Activated T-helper 2 cell treated with anti-CD3 and anti-CD28 coated beads, Interferon-gamma antibody, Interleukin-2, Interleukin-4, amounts not matched to agents 10 μg/mL and 5 μg/mL and 100 μg/mL, durations not matched to agents 14 hours and 24 hours and 36 hours (primary cell): ENCODE measurements at regions of chr3 and their contacts with region 1.

Region 1: DNA sequence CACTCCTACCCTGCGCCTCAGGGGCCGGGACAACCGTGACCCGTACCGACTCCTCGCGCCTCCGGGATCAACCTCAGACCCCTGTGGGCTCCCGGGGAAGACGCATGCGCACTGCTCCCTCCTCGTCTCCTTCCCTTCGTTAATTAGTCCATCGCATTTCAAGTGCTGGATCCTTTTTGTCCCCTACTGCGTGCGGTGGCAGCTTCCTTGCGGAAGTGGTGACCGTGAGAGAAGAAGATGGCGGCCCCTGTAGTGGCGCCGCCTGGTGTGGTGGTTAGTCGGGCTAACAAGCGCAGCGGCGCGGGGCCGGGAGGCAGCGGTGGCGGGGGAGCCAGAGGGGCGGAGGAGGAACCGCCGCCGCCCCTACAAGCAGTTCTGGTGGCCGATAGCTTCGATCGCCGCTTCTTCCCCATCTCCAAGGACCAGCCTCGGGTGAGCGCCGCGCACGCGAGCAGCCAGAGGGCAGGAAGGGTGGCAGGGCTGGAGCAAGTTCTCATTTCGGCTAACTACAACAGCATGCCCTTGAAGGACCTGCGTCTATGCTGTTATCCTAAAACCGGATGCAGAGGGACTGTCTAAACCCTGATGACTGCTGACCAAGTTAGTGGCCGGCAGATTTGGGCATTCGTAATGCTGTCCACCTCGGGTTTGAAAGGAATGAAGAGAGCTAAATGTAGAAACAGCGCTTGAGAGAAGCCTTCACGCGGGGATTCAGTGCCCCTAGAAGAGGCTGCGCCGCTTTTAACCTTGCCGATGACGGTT is at the start of gene EIF2B5:
- DNase-seq: peak; percentile 83
- H3K4me3 Mint-ChIP-seq: peak within 1 kb of the TSS; percentile 91
- H3K27ac Mint-ChIP-seq: peak within 1 kb of the TSS; percentile 92
- H3K4me1 Mint-ChIP-seq: peaks cover 21% of the 10 kb centered on the region
- H3K27me3 Mint-ChIP-seq: peaks cover 2% of the 10 kb centered on the region
- total RNA-seq, gene EIF2B5: 70.2 and 75.0 TPM in 2 replicates

Region 2: GRCh38 chr3:183044547-183045229 is 1090.6 kb before region 1 on chr3:
- intact Hi-C with region 1: no loop called
- DNase-seq: no peak
- H3K4me3 Mint-ChIP-seq: no peak overlapping the region
- H3K27ac Mint-ChIP-seq: no peak overlapping the region
- H3K4me1 Mint-ChIP-seq: peaks cover 7% of the 10 kb centered on the region
- H3K27me3 Mint-ChIP-seq: no peaks in the 10 kb centered on the region

Region 3: DNA sequence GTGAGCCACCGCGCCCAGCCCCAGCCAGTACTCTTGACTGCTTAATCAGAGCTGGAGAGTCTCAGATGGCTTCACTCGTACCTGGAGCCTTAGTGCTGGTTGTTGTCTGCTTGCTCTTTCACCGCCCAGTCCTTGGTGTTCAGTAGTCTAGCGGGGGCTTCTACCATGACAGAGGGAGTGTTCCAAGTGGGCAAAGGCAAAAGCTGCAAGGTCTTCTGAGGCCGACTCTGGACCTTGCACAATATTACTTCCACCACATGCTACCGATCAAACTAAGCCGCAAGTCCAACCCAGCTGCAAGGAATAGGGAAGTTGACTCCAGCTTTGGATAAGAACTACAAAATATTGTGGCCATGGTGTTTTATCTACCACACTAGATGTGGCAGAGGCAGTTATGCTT is 257.3 kb before region 1 on chr3:
- intact Hi-C with region 1: no loop called
- DNase-seq: no peak
- H3K4me3 Mint-ChIP-seq: no peak overlapping the region
- H3K27ac Mint-ChIP-seq: no peak overlapping the region
- H3K4me1 Mint-ChIP-seq: peaks cover 23% of the 10 kb centered on the region
- H3K27me3 Mint-ChIP-seq: no peaks in the 10 kb centered on the region

Region 4: DNA sequence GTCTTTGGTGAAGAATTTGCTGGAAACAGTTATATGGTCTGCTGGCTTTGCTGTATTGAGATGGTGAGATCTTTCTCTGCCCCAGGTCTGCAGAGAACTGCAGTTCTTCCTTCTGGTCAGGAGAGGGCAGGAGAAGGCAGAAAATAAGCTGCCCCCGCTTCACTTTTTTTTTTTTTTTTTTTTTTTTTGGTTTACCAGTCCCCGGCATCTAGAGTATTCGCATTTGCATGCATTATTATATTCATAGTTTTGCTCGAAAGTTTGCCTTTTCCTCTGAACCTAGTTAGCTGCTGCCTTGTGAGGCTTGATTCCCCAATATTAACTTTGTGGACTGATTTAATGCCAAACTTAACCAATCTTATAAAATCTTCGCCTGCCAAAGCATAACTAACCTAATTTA is 240.0 kb before region 1 on chr3:
- intact Hi-C with region 1: loop called (anchors 10 kb)
- DNase-seq: no peak
- H3K4me3 Mint-ChIP-seq: no peak overlapping the region
- H3K27ac Mint-ChIP-seq: no peak overlapping the region
- H3K4me1 Mint-ChIP-seq: peaks cover 3% of the 10 kb centered on the region
- H3K27me3 Mint-ChIP-seq: peaks cover 5% of the 10 kb centered on the region

Region 5: GRCh38 chr3:184017672-184018423 is 117.5 kb before region 1 on chr3 and contains the start of gene ABCC5:
- intact Hi-C with region 1: loop called (anchors 2 kb)
- DNase-seq: peak; percentile 78
- H3K4me3 Mint-ChIP-seq: peak within 1 kb of the TSS; percentile 97
- H3K27ac Mint-ChIP-seq: peak within 1 kb of the TSS; percentile 86
- H3K4me1 Mint-ChIP-seq: peaks cover 23% of the 10 kb centered on the region
- H3K27me3 Mint-ChIP-seq: peaks cover 10% of the 10 kb centered on the region
- total RNA-seq, gene ABCC5: 20.6 and 21.0 TPM in 2 replicates

Region 6: DNA sequence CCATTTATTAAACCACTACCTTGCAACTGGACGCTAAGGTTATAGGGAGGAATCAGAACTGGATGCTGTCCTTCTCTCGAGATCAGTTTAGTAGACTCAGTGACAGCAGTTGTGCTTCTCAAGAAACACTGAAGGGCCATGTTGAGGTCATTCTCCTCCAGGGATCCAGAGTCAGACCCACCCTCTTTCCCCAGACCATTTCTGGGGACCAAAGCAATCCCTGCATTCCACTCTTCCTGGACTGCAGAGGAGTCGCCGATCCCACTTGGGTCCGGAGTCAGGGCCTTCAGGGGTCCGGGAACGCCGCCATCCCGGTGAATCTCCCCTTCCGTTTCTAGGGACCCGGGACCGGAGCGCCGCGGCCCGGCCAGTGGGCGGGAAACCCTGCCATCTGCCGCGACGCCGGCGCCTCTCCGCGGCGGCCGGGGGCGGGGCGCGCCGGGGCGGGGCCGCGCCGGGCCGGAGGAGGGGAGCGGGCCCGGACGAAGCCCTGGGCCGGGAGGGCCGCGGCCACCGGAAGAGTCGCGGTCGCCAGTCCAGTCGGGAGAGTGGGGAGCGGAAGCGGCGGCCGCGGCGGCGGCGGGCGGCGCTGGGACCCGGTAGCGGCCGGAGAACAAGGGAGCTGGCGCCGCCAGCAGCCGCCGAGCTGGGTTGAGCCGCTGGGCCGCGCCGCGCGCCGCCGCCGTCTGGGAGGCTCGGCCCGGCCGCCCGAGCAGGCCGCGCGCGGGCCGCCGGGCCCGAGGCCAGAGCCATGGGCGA is 19.7 kb after region 1 on chr3 and contains the start of gene DVL3:
- intact Hi-C with region 1: loop called (anchors 1 kb)
- DNase-seq: peak; percentile 49
- H3K4me3 Mint-ChIP-seq: peak within 1 kb of the TSS; percentile 96
- H3K27ac Mint-ChIP-seq: peak within 1 kb of the TSS; percentile 79
- H3K4me1 Mint-ChIP-seq: peaks cover 16% of the 10 kb centered on the region
- H3K27me3 Mint-ChIP-seq: no peaks in the 10 kb centered on the region
- total RNA-seq, gene DVL3: 53.8 and 56.1 TPM in 2 replicates

Region 7: GRCh38 chr3:184174646-184175492 is 39.5 kb after region 1 on chr3 and contains the start of gene AP2M1:
- intact Hi-C with region 1: loop called (anchors 1 kb)
- DNase-seq: peak; percentile 98
- H3K4me3 Mint-ChIP-seq: peak within 1 kb of the TSS; percentile 97
- H3K27ac Mint-ChIP-seq: peak within 1 kb of the TSS; percentile 82
- H3K4me1 Mint-ChIP-seq: peaks cover 17% of the 10 kb centered on the region
- H3K27me3 Mint-ChIP-seq: no peaks in the 10 kb centered on the region
- total RNA-seq, gene AP2M1: 234 and 240 TPM in 2 replicates

Region 8: DNA sequence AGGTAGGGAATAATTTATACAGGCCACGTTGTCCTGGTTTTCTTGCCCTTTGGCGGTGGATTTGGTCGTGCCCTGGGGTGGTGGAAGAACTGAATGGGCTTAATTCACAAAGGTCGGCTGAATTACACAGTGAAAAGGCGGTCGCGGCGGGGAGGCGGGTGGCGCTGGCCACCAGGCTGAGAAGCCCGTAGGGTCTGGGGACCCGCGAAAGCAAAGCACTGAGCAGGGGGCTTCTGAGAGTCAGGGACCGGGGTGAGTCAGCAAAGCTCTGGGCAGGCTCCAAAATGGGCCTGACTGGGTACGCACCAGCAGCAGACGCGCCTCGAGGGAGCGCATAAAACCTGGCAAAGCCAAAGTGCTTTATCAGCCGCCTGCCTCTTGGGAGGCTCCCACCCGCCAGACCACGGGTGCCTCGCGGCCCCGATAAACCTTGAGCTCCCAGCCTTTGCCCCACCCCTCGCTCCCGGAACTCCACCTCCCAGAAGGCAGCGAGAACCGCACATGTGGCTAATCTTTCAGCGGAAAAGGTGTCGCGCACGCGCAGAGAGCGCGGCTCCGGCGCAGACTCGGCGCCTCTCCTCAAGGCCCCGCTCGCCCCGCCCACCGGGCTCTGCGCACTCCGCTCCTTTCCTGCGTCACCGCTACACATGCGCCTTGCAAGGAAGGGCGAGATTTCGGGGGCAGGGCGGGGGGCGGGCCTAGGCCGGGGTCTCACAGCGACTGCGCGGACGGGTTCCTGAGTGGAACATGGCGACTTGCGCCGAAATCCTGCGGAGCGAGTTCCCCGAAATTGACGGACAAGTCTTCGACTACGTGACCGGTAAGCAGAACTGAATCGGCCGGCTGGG is 50.4 kb after region 1 on chr3 and contains the start of gene ABCF3:
- intact Hi-C with region 1: loop called (anchors 1 kb)
- DNase-seq: peak; percentile 99
- H3K4me3 Mint-ChIP-seq: peak within 1 kb of the TSS; percentile 94
- H3K27ac Mint-ChIP-seq: peak within 1 kb of the TSS; percentile 93
- H3K4me1 Mint-ChIP-seq: peaks cover 18% of the 10 kb centered on the region
- H3K27me3 Mint-ChIP-seq: no peaks in the 10 kb centered on the region
- total RNA-seq, gene ABCF3: 68.2 and 73.4 TPM in 2 replicates

Region 9: GRCh38 chr3:184362668-184363540 is 227.6 kb after region 1 on chr3:
- intact Hi-C with region 1: loop called (anchors 1 kb)
- DNase-seq: peak; percentile 96
- H3K4me3 Mint-ChIP-seq: peak overlapping the region; percentile 100
- H3K27ac Mint-ChIP-seq: peak overlapping the region; percentile 97
- H3K4me1 Mint-ChIP-seq: peaks cover 22% of the 10 kb centered on the region
- H3K27me3 Mint-ChIP-seq: no peaks in the 10 kb centered on the region